ENCODE measurements at regions of chr22 and their contacts with region 1.

Region 1: DNA sequence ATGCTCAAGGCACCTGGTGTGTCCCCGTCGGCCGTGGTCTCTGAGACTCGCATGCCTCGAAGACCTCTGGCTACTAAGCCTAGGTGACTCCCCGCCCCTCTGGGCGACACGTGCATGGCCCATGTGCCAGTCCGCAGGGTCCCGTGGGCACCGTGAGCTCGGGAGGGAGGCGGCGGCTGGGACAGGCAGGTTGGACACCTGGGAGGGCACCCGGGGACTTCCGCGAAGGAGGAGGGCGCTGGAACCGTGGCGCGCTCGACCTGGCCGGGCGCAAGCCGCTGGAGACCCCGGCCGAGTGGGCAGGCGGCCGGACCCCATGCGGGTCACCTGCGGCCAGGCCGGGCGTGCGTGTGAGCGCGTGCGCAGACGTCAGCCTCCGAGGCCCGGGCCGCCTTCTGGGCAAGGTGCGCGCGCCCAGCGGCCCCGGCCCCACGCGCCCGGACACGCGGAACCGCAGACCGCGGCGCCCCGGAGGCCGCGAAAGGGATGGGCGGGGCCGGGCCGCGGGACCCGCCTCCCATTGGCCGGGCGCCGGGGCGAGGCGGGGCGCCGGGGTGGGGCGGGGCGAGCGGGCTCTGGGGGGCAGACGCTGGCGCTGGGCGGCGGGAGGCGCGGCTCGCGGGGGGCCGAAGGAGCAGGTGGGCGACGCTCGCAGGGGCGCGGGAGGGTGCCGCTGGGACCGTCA is 579 bp upstream of the RASD2 start:
- DNase-seq: no peak
- H3K4me3 ChIP-seq: peak overlapping the region; percentile 42
- CTCF ChIP-seq: no peak

Region 2: DNA sequence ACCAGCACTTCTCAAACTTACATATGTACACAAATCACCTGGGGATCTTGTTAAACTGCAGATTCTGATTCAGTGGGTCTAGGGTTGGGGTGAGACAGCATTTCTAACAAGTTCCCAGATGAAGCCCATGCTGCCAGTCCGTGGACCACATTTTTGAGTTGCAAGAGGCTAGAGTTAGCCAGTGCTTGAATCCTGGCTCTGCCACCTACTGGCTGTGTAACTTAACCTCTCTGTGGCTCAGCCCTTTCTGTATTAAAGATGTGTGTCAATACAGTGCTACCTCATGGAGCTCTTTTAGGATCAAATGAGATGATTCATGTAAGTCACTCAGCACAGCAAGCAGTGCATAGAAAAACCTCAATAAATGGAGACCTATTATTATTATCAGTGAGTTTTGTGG is 564.3 kb before region 1 on chr22:
- in situ Hi-C with region 1: no loop called
- DNase-seq: no peak
- H3K4me3 ChIP-seq: no peak overlapping the region
- CTCF ChIP-seq: no peak

Region 3: DNA sequence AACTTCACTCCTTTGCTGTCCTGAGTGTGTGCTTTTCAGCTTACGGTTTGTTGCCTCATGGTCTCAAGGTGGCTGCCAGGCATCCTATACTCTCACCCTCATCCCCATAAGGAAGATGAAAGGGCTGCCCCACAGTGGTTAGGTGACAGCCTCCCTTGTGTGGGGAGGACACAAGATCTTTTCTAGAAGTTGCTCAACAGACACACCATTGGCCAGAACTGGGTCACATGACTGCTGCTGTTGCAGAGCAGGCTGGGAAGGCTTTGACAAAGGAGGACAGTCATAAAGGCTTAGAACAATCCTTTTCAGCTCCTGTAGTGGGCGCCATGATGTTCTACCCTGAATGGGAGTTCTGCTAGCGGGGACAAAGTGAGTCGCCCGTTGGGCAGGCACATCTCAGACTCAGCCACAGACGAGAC is 69.1 kb before region 1 on chr22:
- in situ Hi-C with region 1: loop called (anchors 5 kb)
- DNase-seq: no peak
- H3K4me3 ChIP-seq: no peak overlapping the region
- CTCF ChIP-seq: no peak

Measured in astrocyte of the cerebellum (primary cell).